ENCODE measurements at regions of chr19 and their contacts with region 1.

Region 1: DNA sequence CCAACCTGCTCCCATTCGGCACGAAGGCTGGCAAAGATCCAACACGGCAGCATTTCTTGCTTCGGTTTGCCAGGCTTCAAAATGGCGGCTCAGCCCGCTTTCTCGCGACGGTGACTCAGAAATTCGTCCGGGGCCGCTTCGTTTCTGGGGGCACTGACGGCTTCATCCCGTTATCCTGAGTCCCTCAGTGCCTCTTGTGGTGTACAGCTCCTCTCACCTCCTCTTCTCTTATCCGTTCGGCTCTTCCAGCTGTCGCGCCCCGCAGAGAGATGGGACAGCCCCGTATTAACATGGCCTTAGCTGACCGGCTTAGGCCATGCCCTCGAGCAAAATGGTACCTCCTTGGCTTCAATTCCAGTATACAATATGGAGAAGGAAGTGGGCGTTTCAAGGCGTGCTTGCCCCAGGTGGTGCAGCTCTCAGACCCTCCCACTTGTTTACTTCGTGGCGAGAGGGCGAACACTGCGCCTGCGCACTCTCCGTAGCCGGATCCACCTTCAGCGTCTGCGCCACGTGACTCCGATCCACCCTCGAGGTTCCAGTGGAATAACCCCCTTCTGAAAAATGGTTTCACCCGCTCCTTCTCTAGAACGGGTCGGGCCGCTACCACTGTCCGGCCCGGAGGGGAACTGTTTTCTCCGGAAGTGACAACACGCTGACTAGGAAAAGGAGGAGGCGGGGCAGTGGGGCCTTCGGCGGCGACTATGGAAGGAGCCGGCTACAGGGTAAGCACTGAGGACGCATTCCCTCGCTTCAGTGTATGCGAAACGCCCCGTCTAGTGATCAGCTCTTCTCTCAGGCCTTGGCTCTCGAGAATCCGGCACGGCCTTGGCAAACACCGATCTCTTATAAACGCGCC is at the starts of genes AKT1S1 and TBC1D17:
- DNase-seq: peak; percentile 99
- H3K4me3 ChIP-seq: peak within 1 kb of the TSS; percentile 79
- H3K27ac ChIP-seq: peak within 1 kb of the TSS; percentile 92
- H3K4me1 ChIP-seq: peaks cover 21% of the 10 kb centered on the region
- H3K27me3 ChIP-seq: no peaks in the 10 kb centered on the region
- CTCF ChIP-seq: no peak
- total RNA-seq, gene AKT1S1: 109 and 143 TPM in 2 replicates
- total RNA-seq, gene TBC1D17: 52.1 and 62.3 TPM in 2 replicates

Region 2: GRCh38 chr19:49363268-49364082 is 513.8 kb before region 1 on chr19 and contains the start of gene DKKL1:
- CTCF ChIA-PET with region 1: no interaction called
- POLR2A ChIA-PET with region 1: no interaction called
- intact Hi-C with region 1: loop called (anchors 2 kb)
- DNase-seq: peak; percentile 97 to 100
- H3K4me3 ChIP-seq: peak within 1 kb of the TSS; percentile 85
- H3K27ac ChIP-seq: no peak within 1 kb of the TSS
- H3K4me1 ChIP-seq: 0 out of 2 replicates have a peak, but pooled peaks cover 10% of the 10 kb centered on the region
- H3K27me3 ChIP-seq: no peaks in the 10 kb centered on the region
- CTCF ChIP-seq: peak; percentile 43; the same call in 1 of the 2 replicates
- total RNA-seq, gene DKKL1: 0.85 TPM in 1 of 2 replicates, not detected in the other

Region 3: DNA sequence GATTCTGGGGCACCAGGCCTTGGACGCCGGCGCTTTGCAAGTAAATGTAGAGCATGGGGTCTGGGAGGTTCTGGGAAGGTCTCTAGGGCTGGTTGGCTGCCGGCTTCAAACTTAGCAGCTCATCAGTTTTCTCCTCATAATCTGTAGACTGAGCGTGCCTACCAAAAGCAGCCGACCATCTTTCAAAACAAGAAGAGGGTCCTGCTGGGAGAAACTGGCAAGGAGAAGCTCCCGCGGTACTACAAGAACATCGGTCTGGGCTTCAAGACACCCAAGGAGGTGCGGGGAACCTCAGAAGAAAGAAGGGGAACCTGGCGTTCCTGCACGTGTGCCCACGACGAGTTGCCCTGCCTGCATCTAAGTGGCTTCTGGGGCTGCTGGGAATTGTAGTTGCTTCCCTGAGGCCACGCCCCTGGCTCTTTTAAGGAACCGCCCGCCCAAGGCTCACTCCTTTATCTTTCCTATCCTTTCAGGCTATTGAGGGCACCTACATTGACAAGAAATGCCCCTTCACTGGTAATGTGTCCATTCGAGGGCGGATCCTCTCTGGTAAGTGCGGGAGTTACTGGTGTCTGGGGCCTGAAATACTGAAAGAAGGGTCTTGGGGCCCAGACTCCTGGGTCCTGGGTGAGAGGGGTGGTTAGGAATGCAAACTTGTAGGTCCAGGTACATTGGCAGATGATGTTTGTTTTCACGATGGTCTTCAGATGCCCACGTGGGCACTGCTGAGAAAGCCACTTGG is 380.0 kb before region 1 on chr19:
- CTCF ChIA-PET with region 1: no interaction called
- POLR2A ChIA-PET with region 1: interaction called, 5 read pairs
- intact Hi-C with region 1: loop called (anchors 2 kb)
- DNase-seq: peak; percentile 55 to 61
- H3K4me3 ChIP-seq: peak overlapping the region; percentile 89
- H3K27ac ChIP-seq: peak overlapping the region; percentile 91
- H3K4me1 ChIP-seq: peaks cover 22% of the 10 kb centered on the region
- H3K27me3 ChIP-seq: no peaks in the 10 kb centered on the region
- CTCF ChIP-seq: no peak

Region 4: GRCh38 chr19:49766007-49766937 is 111.0 kb before region 1 on chr19:
- CTCF ChIA-PET with region 1: no interaction called
- POLR2A ChIA-PET with region 1: no interaction called
- intact Hi-C with region 1: loop called (anchors 2 kb)
- DNase-seq: peak; percentile 99
- H3K4me3 ChIP-seq: peak overlapping the region; percentile 59
- H3K27ac ChIP-seq: peak overlapping the region; percentile 88
- H3K4me1 ChIP-seq: peaks cover 17% of the 10 kb centered on the region
- H3K27me3 ChIP-seq: no peaks in the 10 kb centered on the region
- CTCF ChIP-seq: no peak

Region 5: GRCh38 chr19:49916842-49917733 is 39.8 kb after region 1 on chr19:
- CTCF ChIA-PET with region 1: no interaction called
- POLR2A ChIA-PET with region 1: no interaction called
- intact Hi-C with region 1: no loop called
- DNase-seq: no peak
- H3K4me3 ChIP-seq: no peak overlapping the region
- H3K27ac ChIP-seq: no peak overlapping the region
- H3K4me1 ChIP-seq: no peaks in the 10 kb centered on the region
- H3K27me3 ChIP-seq: no peaks in the 10 kb centered on the region
- CTCF ChIP-seq: peak; percentile 34; the same call in 1 of the 2 replicates

Region 6: GRCh38 chr19:49929611-49930482 is 52.6 kb after region 1 on chr19:
- CTCF ChIA-PET with region 1: no interaction called
- POLR2A ChIA-PET with region 1: interaction called, 6 read pairs
- intact Hi-C with region 1: loop called (anchors 5 kb)
- DNase-seq: peak; percentile 80 to 87
- H3K4me3 ChIP-seq: peak overlapping the region; percentile 83
- H3K27ac ChIP-seq: peak overlapping the region; percentile 79
- H3K4me1 ChIP-seq: peaks cover 18% of the 10 kb centered on the region
- H3K27me3 ChIP-seq: no peaks in the 10 kb centered on the region
- CTCF ChIP-seq: 0 out of 2 replicates have a peak, but pooled peaks have one; percentile 6

Region 7: GRCh38 chr19:50203281-50204080 is 326.2 kb after region 1 on chr19 and contains the start of gene MYH14:
- CTCF ChIA-PET with region 1: no interaction called
- POLR2A ChIA-PET with region 1: no interaction called
- intact Hi-C with region 1: loop called (anchors 2 kb)
- DNase-seq: peak; percentile 92 to 98
- H3K4me3 ChIP-seq: peak within 1 kb of the TSS; percentile 82
- H3K27ac ChIP-seq: peak within 1 kb of the TSS; percentile 97
- H3K4me1 ChIP-seq: peaks cover 33% of the 10 kb centered on the region
- H3K27me3 ChIP-seq: no peaks in the 10 kb centered on the region
- CTCF ChIP-seq: no peak
- total RNA-seq, gene MYH14: 115 and 169 TPM in 2 replicates